ENCODE measurements at regions of chr1 and their contacts with region 1.

Region 1: GRCh38 chr1:159132271-159132881 is 39.0 kb upstream of the CADM3 start:
- DNase-seq: no peak
- H3K4me3 ChIP-seq: no peak overlapping the region
- CTCF ChIP-seq: peak; percentile 77

Region 2: DNA sequence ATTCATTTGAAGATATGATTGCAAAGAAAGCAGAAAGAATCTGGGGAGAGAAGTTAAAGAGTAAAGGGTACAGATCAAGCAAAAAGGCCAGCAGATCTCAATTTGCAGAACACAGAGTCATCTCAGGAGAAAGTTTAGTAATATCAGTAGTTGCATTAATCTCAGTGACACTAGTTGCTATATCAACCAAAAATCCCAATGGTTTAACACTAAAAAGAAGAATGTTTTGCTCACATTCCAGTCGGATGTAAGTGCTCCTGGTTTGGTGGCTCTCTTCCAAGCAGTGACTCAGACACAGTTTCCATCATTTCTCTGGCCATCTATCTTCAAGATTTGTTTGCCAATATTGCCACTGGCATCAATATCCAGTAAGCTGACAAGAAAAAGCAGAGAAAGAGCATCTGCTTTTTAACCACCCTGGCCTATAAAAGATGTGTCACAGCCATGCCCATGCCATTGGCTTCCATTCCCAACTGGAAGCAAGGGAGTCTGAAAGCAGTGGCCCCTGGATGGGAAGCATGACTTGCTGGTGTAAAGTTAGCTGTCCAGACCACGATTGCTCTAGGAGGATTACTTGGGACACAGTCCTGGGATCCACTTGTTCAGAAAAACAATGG is 10.3 kb before region 1 on chr1:
- CTCF ChIA-PET with region 1: interaction called, 15 read pairs
- POLR2A ChIA-PET with region 1: no interaction called
- DNase-seq: no peak
- H3K4me3 ChIP-seq: no peak overlapping the region
- CTCF ChIP-seq: no peak

Region 3: GRCh38 chr1:159197561-159198557 is 65.5 kb after region 1 on chr1:
- CTCF ChIA-PET with region 1: interaction called, 52 read pairs
- POLR2A ChIA-PET with region 1: no interaction called
- DNase-seq: peak; percentile 12
- H3K4me3 ChIP-seq: no peak overlapping the region
- CTCF ChIP-seq: peak; percentile 91